ENCODE measurements at regions of chr3 and their contacts with region 1.

Region 1: GRCh38 chr3:39288300-39288808 is 8.5 kb upstream of the CX3CR1 start:
- DNase-seq: peak; percentile 91
- H3K4me3 ChIP-seq: no peak overlapping the region
- H3K4me3 Mint-ChIP-seq: no peak overlapping the region
- H3K27ac Mint-ChIP-seq: no peak overlapping the region
- H3K4me1 ChIP-seq: peaks cover 17% of the 10 kb centered on the region
- H3K4me1 Mint-ChIP-seq: peaks cover 26% of the 10 kb centered on the region
- H3K27me3 ChIP-seq: no peaks in the 10 kb centered on the region
- H3K27me3 Mint-ChIP-seq: no peaks in the 10 kb centered on the region
- CTCF ChIP-seq: peak; percentile 91 to 95

Region 2: GRCh38 chr3:39101022-39101689 is 187.2 kb before region 1 on chr3:
- CTCF ChIA-PET with region 1: interaction called, 12 read pairs
- POLR2A ChIA-PET with region 1: no interaction called
- intact Hi-C with region 1: loop called (anchors 1 kb)
- DNase-seq: peak in 1 of 2 experiments; percentile 42
- H3K4me3 ChIP-seq: no peak overlapping the region
- H3K4me3 Mint-ChIP-seq: no peak overlapping the region
- H3K27ac Mint-ChIP-seq: no peak overlapping the region
- H3K4me1 ChIP-seq: peaks cover 6% of the 10 kb centered on the region; the same call in 1 of the 2 replicates
- H3K4me1 Mint-ChIP-seq: peaks cover 5% of the 10 kb centered on the region
- H3K27me3 ChIP-seq: no peaks in the 10 kb centered on the region
- H3K27me3 Mint-ChIP-seq: no peaks in the 10 kb centered on the region
- CTCF ChIP-seq: peak; percentile 68 to 69

Region 3: DNA sequence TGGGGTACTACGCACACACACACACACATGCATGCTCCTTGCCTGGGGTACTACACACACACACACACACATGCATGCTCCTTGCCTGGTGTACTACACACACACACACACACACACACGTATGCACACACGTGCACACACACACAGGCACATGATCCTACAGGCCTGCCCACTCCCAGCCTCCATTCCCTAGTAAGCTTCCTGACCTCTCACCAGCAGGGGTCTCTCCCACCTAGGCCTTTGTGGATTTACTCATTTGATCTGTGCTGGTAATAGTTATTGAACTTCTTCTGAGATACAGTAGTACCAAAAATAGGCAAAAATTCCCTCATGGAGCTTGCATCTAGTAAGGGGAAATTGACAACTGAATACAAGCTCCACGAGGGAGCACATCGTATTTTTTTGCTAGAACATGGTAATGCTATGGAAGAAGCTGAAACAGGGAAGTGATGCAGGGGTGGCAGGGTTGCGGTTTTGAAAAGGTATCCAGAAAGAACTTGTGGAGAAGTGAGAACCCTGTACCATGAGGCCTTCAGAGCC is 161.8 kb before region 1 on chr3:
- CTCF ChIA-PET with region 1: interaction called, 68 read pairs
- POLR2A ChIA-PET with region 1: no interaction called
- intact Hi-C with region 1: loop called (anchors 1 kb)
- DNase-seq: peak; percentile 5 to 61
- H3K4me3 ChIP-seq: no peak overlapping the region
- H3K4me3 Mint-ChIP-seq: peak overlapping the region; percentile 8
- H3K27ac Mint-ChIP-seq: peak overlapping the region; percentile 29
- H3K4me1 ChIP-seq: peaks cover 23% of the 10 kb centered on the region
- H3K4me1 Mint-ChIP-seq: peaks cover 27% of the 10 kb centered on the region
- H3K27me3 ChIP-seq: no peaks in the 10 kb centered on the region
- H3K27me3 Mint-ChIP-seq: no peaks in the 10 kb centered on the region
- CTCF ChIP-seq: peak; percentile 29 to 73

Region 4: DNA sequence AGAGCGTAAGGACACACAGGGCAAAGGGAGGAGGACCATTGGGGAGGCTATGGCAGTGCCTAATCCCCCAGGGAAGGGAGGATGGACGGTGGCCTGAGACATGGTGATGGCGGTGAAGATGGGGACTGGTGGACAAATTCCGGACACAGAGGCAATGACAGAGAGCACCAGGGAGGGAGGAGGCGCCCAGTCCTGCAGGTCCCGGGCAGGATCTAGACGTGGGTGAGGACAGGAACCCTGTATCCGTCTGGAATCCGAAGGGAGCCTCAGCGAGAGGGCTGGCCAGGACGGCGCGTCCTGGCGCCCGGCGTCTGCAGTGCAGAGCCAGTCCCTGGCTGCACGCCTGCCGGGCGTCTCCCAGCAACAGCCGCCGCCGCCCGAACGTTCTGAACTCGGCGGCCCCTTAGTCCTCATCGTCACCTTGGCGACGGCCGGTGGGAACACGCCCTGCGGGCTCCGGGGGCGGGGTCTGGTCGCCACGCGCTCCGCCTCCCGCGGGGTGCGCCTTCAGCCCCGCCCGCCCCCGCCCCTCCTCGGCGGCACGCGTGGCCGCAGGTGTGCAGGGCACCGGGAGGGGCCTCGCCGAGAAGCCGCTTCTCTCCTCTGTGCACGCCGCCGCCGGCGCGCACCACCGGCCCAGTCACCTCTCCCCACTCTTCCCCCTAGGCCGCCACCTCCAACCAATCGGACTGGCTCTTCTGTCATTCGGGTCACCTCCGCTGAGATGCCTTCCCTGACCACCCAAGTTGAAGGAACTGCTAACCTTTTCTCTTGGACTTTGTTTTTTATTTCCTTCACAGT is 107.6 kb before region 1 on chr3:
- CTCF ChIA-PET with region 1: interaction called, 13 read pairs
- POLR2A ChIA-PET with region 1: no interaction called
- intact Hi-C with region 1: no loop called
- DNase-seq: peak; percentile 89 to 94
- H3K4me3 ChIP-seq: peak overlapping the region; percentile 37
- H3K4me3 Mint-ChIP-seq: peak overlapping the region; percentile 88
- H3K27ac Mint-ChIP-seq: peak overlapping the region; percentile 97
- H3K4me1 ChIP-seq: peaks cover 24% of the 10 kb centered on the region
- H3K4me1 Mint-ChIP-seq: peaks cover 33% of the 10 kb centered on the region
- H3K27me3 ChIP-seq: no peaks in the 10 kb centered on the region
- H3K27me3 Mint-ChIP-seq: no peaks in the 10 kb centered on the region
- CTCF ChIP-seq: no peak

Region 5: DNA sequence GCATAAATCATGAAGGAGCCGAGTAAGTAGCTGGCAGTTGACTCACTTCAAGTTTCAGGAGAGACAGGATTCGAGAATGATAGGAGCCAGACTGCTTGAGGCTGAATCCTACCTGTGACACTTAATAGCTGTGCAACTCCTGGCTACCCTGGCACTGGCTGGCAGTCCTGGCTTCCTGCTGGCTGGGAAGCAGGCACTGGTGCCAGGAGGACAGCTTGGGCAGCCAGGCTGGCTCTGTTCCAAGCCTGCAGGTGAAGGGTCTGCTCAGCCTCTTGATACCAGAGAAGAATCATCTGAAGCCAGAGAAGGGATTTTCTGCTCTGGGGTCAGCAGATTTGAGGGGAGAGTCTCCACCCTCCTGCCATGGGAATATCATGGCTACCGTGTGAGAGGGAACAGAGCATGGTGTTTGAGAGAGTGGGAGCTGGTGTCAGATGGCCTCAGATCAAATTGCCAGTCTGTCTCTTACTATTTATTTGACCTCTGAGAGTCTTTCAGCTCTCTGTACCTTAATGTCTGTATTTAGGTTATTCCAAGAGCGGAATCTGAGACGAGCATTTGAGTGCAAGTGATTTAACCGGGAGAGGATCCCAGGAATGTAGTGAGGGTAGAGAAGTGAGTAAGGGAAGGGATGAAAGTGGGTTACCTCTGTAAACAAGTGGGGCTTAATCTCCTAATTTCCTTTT is 91.5 kb before region 1 on chr3:
- CTCF ChIA-PET with region 1: interaction called, 132 read pairs
- POLR2A ChIA-PET with region 1: interaction called, 3 read pairs
- intact Hi-C with region 1: no loop called
- DNase-seq: no peak
- H3K4me3 ChIP-seq: no peak overlapping the region
- H3K4me3 Mint-ChIP-seq: no peak overlapping the region
- H3K27ac Mint-ChIP-seq: no peak overlapping the region
- H3K4me1 ChIP-seq: peaks cover 3% of the 10 kb centered on the region; the same call in 1 of the 2 replicates
- H3K4me1 Mint-ChIP-seq: peaks cover 12% of the 10 kb centered on the region
- H3K27me3 ChIP-seq: no peaks in the 10 kb centered on the region
- H3K27me3 Mint-ChIP-seq: peaks cover 9% of the 10 kb centered on the region
- CTCF ChIP-seq: no peak

Region 6: GRCh38 chr3:39275052-39275451 is 13.3 kb before region 1 on chr3:
- CTCF ChIA-PET with region 1: interaction called, 32 read pairs
- POLR2A ChIA-PET with region 1: no interaction called
- intact Hi-C with region 1: no loop called
- DNase-seq: peak in 1 of 2 experiments; percentile 32
- H3K4me3 ChIP-seq: no peak overlapping the region
- H3K4me3 Mint-ChIP-seq: no peak overlapping the region
- H3K27ac Mint-ChIP-seq: no peak overlapping the region
- H3K4me1 ChIP-seq: peaks cover 16% of the 10 kb centered on the region
- H3K4me1 Mint-ChIP-seq: peaks cover 15% of the 10 kb centered on the region
- H3K27me3 ChIP-seq: no peaks in the 10 kb centered on the region
- H3K27me3 Mint-ChIP-seq: no peaks in the 10 kb centered on the region
- CTCF ChIP-seq: no peak

Region 7: GRCh38 chr3:39378088-39378487 is 89.7 kb after region 1 on chr3:
- CTCF ChIA-PET with region 1: interaction called, 29 read pairs
- POLR2A ChIA-PET with region 1: no interaction called
- intact Hi-C with region 1: loop called (anchors 1 kb)
- DNase-seq: peak; percentile 67 to 68
- H3K4me3 ChIP-seq: no peak overlapping the region
- H3K4me3 Mint-ChIP-seq: no peak overlapping the region
- H3K27ac Mint-ChIP-seq: no peak overlapping the region
- H3K4me1 ChIP-seq: peaks cover 15% of the 10 kb centered on the region
- H3K4me1 Mint-ChIP-seq: no peaks in the 10 kb centered on the region
- H3K27me3 ChIP-seq: no peaks in the 10 kb centered on the region
- H3K27me3 Mint-ChIP-seq: no peaks in the 10 kb centered on the region
- CTCF ChIP-seq: peak; percentile 63 to 87